ENCODE measurements at regions of chr4 and their contacts with region 1.

Region 1: DNA sequence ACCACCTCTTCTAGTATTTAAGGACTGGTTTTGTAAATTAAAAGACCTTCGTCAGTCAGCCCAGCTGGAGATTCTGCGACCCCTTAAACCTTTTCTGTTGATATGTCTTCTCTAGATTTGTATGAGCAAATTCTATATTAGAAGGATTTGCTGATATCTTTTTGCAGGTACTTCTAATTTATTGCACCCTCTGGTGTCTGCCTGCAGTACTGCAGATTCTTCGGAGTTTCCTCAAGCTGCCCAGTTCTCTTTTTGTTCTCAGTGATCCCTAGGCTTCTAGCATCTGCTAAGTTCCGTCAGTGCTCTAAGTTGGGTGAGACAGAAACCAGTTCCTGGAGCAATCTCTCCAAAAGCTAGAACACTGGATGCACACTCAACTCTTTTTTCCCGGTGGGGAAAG is 545.2 kb downstream of the C4orf33 start:
- DNase-seq: peak; percentile 13
- H3K4me3 ChIP-seq: no peak overlapping the region; a peak in 1 of 4 replicates
- H3K27ac ChIP-seq: no peak overlapping the region
- H3K4me1 ChIP-seq: no peaks in the 10 kb centered on the region
- H3K27me3 ChIP-seq: no peaks in the 10 kb centered on the region
- CTCF ChIP-seq: peak; percentile 81
- EP300 ChIP-seq: no peak
- RAD21 ChIP-seq: peak; percentile 76

Region 2: DNA sequence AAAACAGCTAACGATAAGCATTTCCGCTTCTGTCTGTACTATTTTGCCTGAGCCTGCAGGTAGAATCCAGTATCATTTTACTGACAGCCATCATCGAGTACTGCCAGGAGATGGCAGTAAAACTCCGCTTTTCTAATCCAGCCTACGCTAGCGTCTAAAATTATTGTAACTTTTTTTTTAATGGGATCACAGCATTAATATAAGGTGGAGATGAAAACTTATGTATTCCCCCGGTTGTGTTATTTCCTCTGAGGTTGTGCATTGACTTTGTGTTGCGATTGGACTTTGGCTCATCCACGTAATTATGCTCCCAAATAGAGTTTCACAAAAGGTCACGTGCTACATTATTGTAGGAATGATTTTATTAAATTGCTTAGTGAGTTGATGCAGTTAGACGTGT is 297.1 kb before region 1 on chr4:
- CTCF ChIA-PET with region 1: interaction called, 26 read pairs
- POLR2A ChIA-PET with region 1: no interaction called
- DNase-seq: peak; percentile 34
- H3K4me3 ChIP-seq: no peak overlapping the region
- H3K27ac ChIP-seq: no peak overlapping the region
- H3K4me1 ChIP-seq: peaks cover 0 to 7% of the 10 kb centered on the region in 2 experiments; a peak in 1 of 4 replicates
- H3K27me3 ChIP-seq: no peaks in the 10 kb centered on the region
- CTCF ChIP-seq: peak; percentile 77
- EP300 ChIP-seq: no peak
- RAD21 ChIP-seq: peak; percentile 79

Region 3: GRCh38 chr4:129526814-129527213 is 114.4 kb before region 1 on chr4:
- CTCF ChIA-PET with region 1: interaction called, 18 read pairs
- POLR2A ChIA-PET with region 1: no interaction called
- DNase-seq: peak; percentile 3
- H3K4me3 ChIP-seq: no peak overlapping the region
- H3K27ac ChIP-seq: no peak overlapping the region
- H3K4me1 ChIP-seq: no peaks in the 10 kb centered on the region
- H3K27me3 ChIP-seq: no peaks in the 10 kb centered on the region
- CTCF ChIP-seq: peak; percentile 40; the same call in 1 of the 2 replicates
- EP300 ChIP-seq: no peak
- RAD21 ChIP-seq: peak; percentile 64

Region 4: DNA sequence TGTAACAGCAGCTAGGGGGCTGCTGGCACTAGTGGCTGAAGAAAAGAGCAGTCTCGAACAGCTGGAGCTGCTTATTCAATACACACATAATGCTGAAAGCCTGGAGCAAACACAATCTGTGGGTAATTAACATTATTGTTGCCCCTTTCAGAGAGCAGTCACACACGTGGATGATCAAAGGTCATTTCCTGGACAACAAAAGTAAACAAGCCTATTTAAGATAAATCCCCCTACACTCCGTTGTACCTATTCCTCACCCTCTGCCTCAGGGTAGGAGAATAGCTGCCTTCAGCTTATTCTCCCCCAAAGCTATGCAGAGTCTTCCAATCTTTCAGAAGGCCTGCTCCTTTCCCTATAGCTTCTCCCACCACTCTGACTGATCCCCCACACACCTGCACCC is 258.7 kb after region 1 on chr4:
- CTCF ChIA-PET with region 1: no interaction called
- POLR2A ChIA-PET with region 1: no interaction called
- DNase-seq: no peak
- H3K4me3 ChIP-seq: no peak overlapping the region
- H3K27ac ChIP-seq: no peak overlapping the region
- H3K4me1 ChIP-seq: no peaks in the 10 kb centered on the region
- H3K27me3 ChIP-seq: no peaks in the 10 kb centered on the region
- CTCF ChIP-seq: no peak
- EP300 ChIP-seq: no peak
- RAD21 ChIP-seq: no peak